Activated T-helper 1 cell treated with anti-CD3 and anti-CD28 coated beads, Interleukin-12 subunit alpha, Interleukin-12 subunit beta, Interleukin-2, Interleukin-4 antibody, amounts not matched to agents 30 ng/mL and 10 ng/mL and 1 ng/mL, durations not matched to agents 14 hours and 24 hours and 36 hours (primary cell): ENCODE measurements at regions of chr12 and their contacts with region 1.

Region 1: GRCh38 chr12:2691006-2691344 is 103.8 kb upstream of the FKBP4 start:
- DNase-seq: peak; percentile 41
- H3K4me3 Mint-ChIP-seq: peak overlapping the region; percentile 86
- H3K27ac Mint-ChIP-seq: peak overlapping the region; percentile 84
- H3K4me1 Mint-ChIP-seq: peaks cover 39% of the 10 kb centered on the region
- H3K27me3 Mint-ChIP-seq: peaks cover 12% of the 10 kb centered on the region

Region 2: GRCh38 chr12:2004113-2004929 is 686.7 kb before region 1 on chr12 and contains the start of gene DCP1B:
- intact Hi-C with region 1: loop called (anchors 10 kb)
- DNase-seq: peak; percentile 93
- H3K4me3 Mint-ChIP-seq: peak within 1 kb of the TSS; percentile 97
- H3K27ac Mint-ChIP-seq: peak within 1 kb of the TSS; percentile 95
- H3K4me1 Mint-ChIP-seq: peaks cover 31% of the 10 kb centered on the region
- H3K27me3 Mint-ChIP-seq: peaks cover 3% of the 10 kb centered on the region
- total RNA-seq, gene DCP1B: 8.8 and 9.8 TPM in 2 replicates

Region 3: GRCh38 chr12:2376908-2377657 is 313.9 kb before region 1 on chr12:
- intact Hi-C with region 1: loop called (anchors 5 kb)
- DNase-seq: no peak
- H3K4me3 Mint-ChIP-seq: no peak overlapping the region
- H3K27ac Mint-ChIP-seq: no peak overlapping the region
- H3K4me1 Mint-ChIP-seq: peaks cover 36% of the 10 kb centered on the region
- H3K27me3 Mint-ChIP-seq: peaks cover 9% of the 10 kb centered on the region

Region 4: DNA sequence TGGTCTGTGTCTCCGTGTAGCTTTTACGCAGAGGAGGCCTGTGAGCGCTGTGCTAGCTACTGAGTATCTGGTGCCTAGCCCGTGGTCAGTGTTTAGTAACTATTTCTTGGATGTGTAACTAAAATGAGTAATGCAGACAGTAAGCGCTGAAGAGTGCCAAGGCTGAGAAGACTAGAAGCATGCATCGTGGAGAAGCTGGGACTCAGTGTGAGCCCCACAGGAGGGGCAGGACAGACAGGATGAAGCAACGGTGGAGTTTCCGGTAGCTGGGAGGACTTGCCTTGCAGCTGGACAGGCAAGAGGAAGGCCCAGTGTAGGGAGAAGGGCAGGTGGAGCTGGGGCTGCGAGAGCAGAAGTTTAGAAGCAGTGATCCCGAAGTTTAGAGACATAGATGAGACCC is 129.6 kb before region 1 on chr12:
- intact Hi-C with region 1: no loop called
- DNase-seq: no peak
- H3K4me3 Mint-ChIP-seq: no peak overlapping the region
- H3K27ac Mint-ChIP-seq: no peak overlapping the region
- H3K4me1 Mint-ChIP-seq: no peaks in the 10 kb centered on the region
- H3K27me3 Mint-ChIP-seq: peaks cover 4% of the 10 kb centered on the region

Region 5: DNA sequence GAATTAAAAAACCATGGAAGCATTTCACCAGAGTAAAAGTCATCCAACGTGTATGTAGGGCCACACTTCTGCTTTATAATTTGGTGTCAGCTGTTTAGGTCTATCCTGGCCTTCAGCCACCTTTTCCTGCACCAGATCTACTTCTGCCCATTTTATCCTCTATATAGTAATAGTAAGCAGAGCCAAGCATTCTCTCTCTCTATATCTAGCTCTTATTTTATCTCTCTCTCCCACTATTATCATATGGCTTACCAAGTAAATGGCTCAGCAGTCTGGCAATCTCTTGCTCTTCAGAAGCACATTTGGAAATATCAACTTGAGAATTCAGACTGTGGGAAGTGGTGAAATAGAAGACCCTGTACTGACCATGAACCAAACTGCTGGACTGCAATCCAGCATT is 19.7 kb after region 1 on chr12:
- intact Hi-C with region 1: no loop called
- DNase-seq: no peak
- H3K4me3 Mint-ChIP-seq: no peak overlapping the region
- H3K27ac Mint-ChIP-seq: no peak overlapping the region
- H3K4me1 Mint-ChIP-seq: no peaks in the 10 kb centered on the region
- H3K27me3 Mint-ChIP-seq: peaks cover 31% of the 10 kb centered on the region

Region 6: DNA sequence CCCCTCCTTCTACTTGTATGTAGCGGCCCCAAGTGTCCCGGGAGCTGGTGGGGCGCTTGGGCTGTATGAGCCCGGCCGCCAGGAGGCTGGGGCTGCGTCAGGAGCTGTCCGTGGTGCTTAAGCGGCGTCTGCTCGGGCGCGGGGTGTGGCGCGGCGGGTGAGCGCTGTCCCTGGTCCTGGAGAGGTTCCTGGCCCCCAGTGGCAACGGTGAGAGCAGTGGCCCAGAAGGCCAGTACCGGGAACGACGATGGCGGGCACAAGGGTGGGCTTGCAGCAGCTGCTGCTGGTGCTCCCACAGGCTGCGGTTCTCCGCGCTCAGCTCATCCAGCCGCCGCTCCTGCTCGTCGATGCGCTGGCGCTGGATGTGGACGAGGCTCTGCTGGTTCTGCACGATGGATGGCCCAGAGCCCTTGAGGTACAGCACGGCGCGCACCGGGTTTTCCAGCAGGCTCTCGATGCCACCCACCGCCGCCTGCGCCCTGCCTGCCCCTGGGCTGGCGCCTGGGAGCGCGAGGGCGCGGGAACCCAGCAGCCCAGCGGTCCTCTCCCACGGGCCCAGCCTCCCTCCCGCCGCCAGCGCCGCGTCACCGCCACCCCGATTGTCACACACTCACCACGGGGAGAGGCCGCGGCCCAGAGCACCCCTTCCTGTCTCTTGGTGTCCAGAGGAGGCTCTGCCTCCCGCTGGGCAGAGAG is 61.8 kb after region 1 on chr12:
- intact Hi-C with region 1: loop called (anchors 1 kb)
- DNase-seq: peak; percentile 78
- H3K4me3 Mint-ChIP-seq: no peak overlapping the region
- H3K27ac Mint-ChIP-seq: no peak overlapping the region
- H3K4me1 Mint-ChIP-seq: no peaks in the 10 kb centered on the region
- H3K27me3 Mint-ChIP-seq: peaks cover 18% of the 10 kb centered on the region

Region 7: DNA sequence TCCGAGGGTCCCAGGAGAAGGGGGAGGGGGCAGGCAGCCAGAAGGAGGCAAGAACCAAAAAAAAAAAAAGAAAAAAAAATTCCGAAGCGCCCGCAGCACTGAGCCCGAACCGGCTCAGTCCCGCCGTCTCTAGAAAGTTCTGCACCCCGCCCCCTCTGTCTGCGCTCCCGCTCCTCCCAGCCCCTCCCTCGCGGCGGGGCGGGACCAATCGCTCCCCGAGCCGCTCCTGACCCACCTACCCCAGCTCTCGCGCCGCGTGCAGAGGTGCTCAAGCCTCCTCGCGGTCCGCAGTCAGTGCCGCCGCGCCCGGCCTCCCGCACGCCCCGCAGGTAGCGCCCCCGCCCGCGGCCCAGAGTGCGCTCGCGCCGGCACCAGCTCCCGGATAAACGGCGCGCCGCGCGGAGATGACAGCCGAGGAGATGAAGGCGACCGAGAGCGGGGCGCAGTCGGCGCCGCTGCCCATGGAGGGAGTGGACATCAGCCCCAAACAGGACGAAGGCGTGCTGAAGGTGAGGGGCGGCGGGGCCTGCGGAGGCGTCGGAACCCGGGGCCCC is 103.8 kb after region 1 on chr12 and contains the start of gene FKBP4:
- intact Hi-C with region 1: loop called (anchors 1 kb)
- DNase-seq: peak; percentile 86
- H3K4me3 Mint-ChIP-seq: peak within 1 kb of the TSS; percentile 96
- H3K27ac Mint-ChIP-seq: peak within 1 kb of the TSS; percentile 75
- H3K4me1 Mint-ChIP-seq: peaks cover 15% of the 10 kb centered on the region
- H3K27me3 Mint-ChIP-seq: peaks cover 20% of the 10 kb centered on the region
- total RNA-seq, gene FKBP4: 247 and 269 TPM in 2 replicates

Region 8: DNA sequence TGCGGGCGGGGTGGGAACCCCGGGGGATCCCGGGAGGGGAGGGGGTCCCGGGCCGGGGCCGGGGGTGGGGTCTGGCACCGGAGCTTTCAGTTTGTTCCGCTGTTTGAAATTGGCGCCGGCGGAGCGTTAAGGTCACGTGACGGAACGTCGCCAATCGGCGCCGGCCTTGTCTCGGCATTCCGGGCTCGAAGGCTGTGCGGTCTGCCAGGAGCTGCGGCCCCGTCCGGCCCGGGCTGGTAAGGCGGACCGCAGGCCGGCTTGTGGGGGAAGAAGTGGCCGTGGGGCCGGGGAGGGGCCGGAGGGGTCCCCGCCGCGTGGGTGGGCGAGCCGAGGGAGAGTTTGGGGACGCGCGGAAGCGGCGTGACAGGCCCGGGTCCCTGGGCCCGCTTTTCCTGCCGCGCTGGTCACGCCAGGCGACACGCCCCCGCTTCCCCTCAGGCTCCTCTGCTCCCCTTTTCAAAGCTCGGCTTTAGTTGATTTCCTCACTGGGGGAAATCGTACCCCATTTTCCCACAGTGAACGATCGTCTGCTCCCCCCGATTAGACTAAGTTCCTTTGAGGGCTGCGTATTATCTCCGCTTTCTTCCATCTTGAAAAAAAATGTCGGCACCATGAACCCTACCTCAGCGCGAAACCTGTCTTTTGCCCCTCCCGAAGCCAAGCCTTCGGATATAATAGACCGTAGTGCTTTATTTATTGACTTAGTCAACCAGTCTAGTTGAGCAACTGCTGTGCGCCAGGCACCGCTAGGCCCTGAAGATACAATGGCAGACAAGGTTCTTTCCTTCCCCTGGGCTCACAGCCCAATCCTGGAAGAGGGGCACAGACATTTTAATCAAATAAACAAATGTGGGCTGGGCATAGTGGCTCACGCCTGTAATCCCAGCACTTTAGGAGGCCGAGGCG is 186.3 kb after region 1 on chr12 and contains the starts of genes FOXM1 and RHNO1:
- intact Hi-C with region 1: loop called (anchors 5 kb)
- DNase-seq: peak; percentile 86
- H3K4me3 Mint-ChIP-seq: peak within 1 kb of the TSS; percentile 99
- H3K27ac Mint-ChIP-seq: peak within 1 kb of the TSS; percentile 100
- H3K4me1 Mint-ChIP-seq: peaks cover 51% of the 10 kb centered on the region
- H3K27me3 Mint-ChIP-seq: no peaks in the 10 kb centered on the region
- total RNA-seq, gene FOXM1: 72.6 and 75.9 TPM in 2 replicates
- total RNA-seq, gene RHNO1: 43.3 and 48.1 TPM in 2 replicates